Adrenal gland (tissue), 19 donors: ENCODE measurements at regions of chr11 and their contacts with region 1.

Region 1: GRCh38 chr11:2151500-2152257 is 9.3 kb downstream of the INS start:
- DNase-seq: peak; percentile 68 to 94 (median 86)
- H3K4me3 ChIP-seq: no peak overlapping the region
- H3K27ac ChIP-seq: no peak overlapping the region
- H3K4me1 ChIP-seq: peaks cover 0 to 6% of the 10 kb centered on the region in 2 donors
- H3K27me3 ChIP-seq: peaks cover 14% of the 10 kb centered on the region
- CTCF ChIP-seq: peak; percentile 72 to 93 (median 88)
- POLR2A ChIP-seq: no peak

Region 2: DNA sequence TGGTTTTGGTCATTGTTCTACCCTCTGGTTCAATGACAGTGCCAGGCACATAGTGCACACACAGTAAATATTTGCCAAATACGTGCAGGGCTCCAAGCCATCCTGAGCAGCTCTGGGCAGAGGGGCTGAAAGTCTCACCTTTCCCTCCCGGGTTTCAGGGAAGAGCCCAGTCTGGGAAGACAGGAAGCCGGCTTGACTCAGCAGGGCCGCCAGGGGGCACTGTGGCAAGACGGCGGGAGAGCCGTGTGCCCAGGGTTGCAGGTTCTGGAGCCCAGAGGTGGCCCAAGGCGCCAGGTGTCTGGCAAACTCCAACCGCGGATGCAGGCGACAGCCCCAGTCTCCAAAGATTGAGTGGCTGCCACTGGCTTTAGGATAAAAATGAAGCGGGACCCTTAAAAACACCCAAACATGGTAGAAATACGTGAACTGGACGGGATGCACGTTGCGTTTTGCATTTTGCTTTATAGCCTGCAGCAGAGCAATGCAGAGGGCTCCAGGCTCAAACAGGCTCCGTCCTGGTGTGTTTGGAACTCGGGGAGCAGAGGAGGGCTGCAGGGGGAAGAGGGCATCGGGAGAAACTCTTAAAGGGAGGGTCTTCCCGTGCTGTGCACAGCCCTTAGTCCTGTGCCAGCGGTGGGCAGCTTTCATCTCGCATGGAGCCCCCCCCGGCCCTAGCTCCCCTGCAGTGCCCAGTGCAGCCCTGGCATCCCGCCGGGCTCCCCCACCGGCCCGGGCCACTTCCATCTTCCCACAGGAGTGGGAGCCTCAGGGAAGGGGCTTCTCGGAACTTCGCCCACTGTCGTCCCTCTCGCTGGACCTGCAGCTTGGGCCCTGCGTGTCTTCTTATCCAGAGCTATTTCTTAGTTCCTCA is 511.4 kb before region 1 on chr11:
- intact Hi-C with region 1: loop called in 1 of 2 experiments (anchors 10 kb)
- DNase-seq: peak in 2 of 7 donors; percentile 32 to 47
- H3K4me3 ChIP-seq: no peak overlapping the region
- H3K27ac ChIP-seq: no peak overlapping the region
- H3K4me1 ChIP-seq: no peaks in the 10 kb centered on the region
- H3K27me3 ChIP-seq: peaks cover 14% of the 10 kb centered on the region
- CTCF ChIP-seq: peak; percentile 40 to 73 (median 55)
- POLR2A ChIP-seq: no peak

Region 3: GRCh38 chr11:1652771-1653540 is 498.7 kb before region 1 on chr11:
- intact Hi-C with region 1: loop called (anchors 5 to 10 kb)
- DNase-seq: peak; percentile 63 to 88 (median 81)
- H3K4me3 ChIP-seq: no peak overlapping the region
- H3K27ac ChIP-seq: no peak overlapping the region
- H3K4me1 ChIP-seq: peaks cover 0 to 15% of the 10 kb centered on the region in 2 donors
- H3K27me3 ChIP-seq: peaks cover 5% of the 10 kb centered on the region
- CTCF ChIP-seq: peak; percentile 91 to 99 (median 96)
- POLR2A ChIP-seq: no peak

Region 4: DNA sequence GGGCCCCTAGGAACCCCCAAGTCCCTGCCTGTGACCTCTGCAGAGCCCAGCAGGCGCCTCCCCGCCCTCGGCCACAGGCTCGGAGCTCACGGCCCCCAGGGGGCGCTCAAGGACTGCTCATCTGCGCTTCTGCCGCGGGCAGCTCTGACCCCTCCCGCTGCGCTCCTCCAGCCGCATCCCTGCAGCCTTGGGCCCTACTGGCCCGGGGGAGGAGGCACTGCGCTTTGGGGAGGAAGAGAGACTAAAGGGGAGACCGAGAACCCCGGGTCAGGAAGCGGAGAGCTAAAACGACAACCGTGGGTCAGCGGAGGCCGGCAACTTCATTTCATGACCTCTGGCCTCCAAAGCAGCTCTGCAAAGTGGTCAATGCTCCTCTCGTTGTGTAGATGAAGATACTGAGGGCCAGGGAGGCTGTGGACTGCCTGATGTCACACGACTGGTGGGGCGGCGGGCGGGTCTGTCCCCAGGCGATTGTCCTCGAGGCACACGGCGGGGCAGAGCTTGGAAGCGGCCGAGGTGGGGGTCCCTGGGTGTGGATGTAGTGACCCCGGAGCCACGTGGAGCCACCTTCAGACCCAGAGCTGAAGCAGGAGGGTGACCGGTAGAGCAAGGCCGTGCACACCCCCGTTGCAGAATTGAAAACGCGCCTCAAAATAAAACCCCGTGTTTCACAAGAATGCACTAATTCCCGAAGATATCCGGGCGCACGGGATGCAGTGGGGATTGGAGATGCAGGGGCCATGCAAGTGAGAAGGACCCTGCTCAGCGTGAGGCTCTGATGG is 457.4 kb before region 1 on chr11:
- intact Hi-C with region 1: loop called (anchors 2 to 5 kb)
- DNase-seq: peak; percentile 82 to 92 (median 90)
- H3K4me3 ChIP-seq: peak overlapping the region in 1 of 4 donors; percentile 21
- H3K27ac ChIP-seq: no peak overlapping the region
- H3K4me1 ChIP-seq: peaks cover 7 to 11% of the 10 kb centered on the region in 2 donors
- H3K27me3 ChIP-seq: no peaks in the 10 kb centered on the region
- CTCF ChIP-seq: peak; percentile 91 to 96 (median 94)
- POLR2A ChIP-seq: no peak

Region 5: GRCh38 chr11:1796413-1797011 is 355.2 kb before region 1 on chr11:
- intact Hi-C with region 1: no loop called
- DNase-seq: no peak
- H3K4me3 ChIP-seq: no peak overlapping the region
- H3K27ac ChIP-seq: no peak overlapping the region
- H3K4me1 ChIP-seq: no peaks in the 10 kb centered on the region
- H3K27me3 ChIP-seq: peaks cover 6% of the 10 kb centered on the region
- CTCF ChIP-seq: no peak
- POLR2A ChIP-seq: no peak

Region 6: DNA sequence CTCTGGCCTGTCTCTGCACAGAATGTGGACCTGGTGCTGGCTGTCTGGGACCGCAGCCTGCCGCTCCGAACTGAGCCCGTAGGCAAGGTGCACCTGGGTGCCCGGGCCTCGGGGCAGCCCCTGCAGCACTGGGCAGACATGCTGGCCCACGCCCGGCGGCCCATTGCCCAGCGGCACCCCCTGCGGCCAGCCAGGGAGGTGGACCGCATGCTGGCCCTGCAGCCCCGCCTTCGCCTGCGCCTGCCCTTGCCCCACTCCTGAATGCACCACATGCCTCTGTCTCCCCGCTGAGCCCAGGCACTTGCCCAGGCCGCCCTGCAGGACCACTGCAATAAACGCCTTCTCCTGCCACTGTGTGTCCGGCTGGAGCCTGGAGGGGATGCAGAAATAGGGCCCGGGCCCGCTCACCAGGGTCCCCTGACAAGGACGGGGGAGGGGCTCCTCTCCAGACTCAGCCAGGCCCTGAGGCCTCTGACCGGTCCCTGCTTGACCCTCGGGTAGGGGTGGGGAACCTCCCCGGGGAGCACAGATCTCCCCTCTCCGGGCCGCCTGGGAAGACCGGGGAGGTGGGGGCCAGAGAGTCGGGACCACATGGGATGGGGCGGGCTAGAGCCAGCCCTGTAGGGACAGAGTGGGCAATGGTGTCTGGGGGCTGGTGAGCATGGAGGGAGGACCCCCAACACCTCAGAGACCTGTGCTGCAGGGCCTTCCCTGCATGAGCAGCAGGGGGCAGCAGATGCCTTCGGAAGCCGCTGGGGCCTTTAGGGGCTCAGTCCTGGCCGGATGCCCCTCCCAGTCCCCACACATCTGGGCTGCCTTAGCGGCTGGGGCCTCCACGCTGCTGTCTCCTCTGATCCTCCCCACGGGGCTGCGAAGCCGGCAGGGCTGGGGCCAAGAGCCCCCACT is 314.3 kb before region 1 on chr11:
- intact Hi-C with region 1: loop called (anchors 2 to 5 kb)
- DNase-seq: peak; percentile 70 to 83 (median 77)
- H3K4me3 ChIP-seq: no peak overlapping the region
- H3K27ac ChIP-seq: peak overlapping the region in 2 of 5 donors; percentile 30 to 62
- H3K4me1 ChIP-seq: peaks cover 19 to 20% of the 10 kb centered on the region in 2 donors
- H3K27me3 ChIP-seq: no peaks in the 10 kb centered on the region
- CTCF ChIP-seq: peak; percentile 84 to 97 (median 92)
- POLR2A ChIP-seq: no peak

Region 7: GRCh38 chr11:1882519-1883238 is 269.0 kb before region 1 on chr11:
- intact Hi-C with region 1: loop called in 1 of 2 experiments (anchors 5 kb)
- DNase-seq: peak; percentile 73 to 88 (median 82)
- H3K4me3 ChIP-seq: no peak overlapping the region
- H3K27ac ChIP-seq: peak overlapping the region in 3 of 5 donors; percentile 26 to 97 (median 76)
- H3K4me1 ChIP-seq: peaks cover 0 to 24% of the 10 kb centered on the region in 2 donors
- H3K27me3 ChIP-seq: no peaks in the 10 kb centered on the region
- CTCF ChIP-seq: peak; percentile 81 to 93 (median 86)
- POLR2A ChIP-seq: no peak

Region 8: DNA sequence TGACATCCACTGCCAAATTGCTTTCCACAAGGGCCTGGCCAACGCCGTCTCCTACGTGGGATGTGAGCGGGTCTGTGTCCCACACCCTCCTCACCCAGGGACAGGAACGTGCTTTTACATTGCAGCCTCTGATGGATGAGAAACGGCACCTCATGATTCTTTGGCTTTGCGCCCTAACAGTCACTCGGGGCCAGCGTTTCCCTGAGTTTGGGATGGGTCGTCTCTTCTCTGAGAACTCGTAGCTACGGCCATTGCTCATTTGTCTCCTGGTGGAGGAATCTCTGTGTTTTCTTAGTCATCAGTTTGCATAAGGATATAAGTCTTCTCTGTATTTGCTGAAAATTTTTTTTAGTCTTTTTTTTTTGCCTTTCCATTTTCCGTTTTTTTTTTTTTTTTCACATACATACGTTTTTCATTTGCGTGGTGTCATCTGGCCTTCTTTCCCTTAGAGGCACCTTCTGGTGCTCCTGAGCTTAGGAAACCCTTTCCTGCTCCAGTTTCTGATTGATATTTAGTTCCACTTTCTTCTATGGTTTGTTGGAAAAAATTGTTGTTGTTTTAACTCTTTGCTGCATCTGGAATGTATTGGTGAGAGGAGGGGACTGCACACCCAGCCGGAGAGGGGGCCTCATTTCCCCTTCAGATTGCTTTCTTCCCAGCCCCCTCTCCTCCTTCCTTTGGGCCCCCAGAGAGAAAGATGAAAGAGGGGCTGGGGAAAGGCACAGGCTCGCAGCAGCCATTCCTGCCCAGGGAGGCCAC is 220.2 kb before region 1 on chr11:
- intact Hi-C with region 1: loop called in 1 of 2 experiments (anchors 5 kb)
- DNase-seq: peak in 5 of 7 donors; percentile 15 to 76 (median 46)
- H3K4me3 ChIP-seq: no peak overlapping the region
- H3K27ac ChIP-seq: peak overlapping the region in 2 of 5 donors; percentile 67 to 70
- H3K4me1 ChIP-seq: peaks cover 0 to 3% of the 10 kb centered on the region in 2 donors
- H3K27me3 ChIP-seq: no peaks in the 10 kb centered on the region
- CTCF ChIP-seq: no peak
- POLR2A ChIP-seq: no peak

Region 9: GRCh38 chr11:2325719-2326118 is 174.0 kb after region 1 on chr11:
- intact Hi-C with region 1: no loop called
- DNase-seq: peak; percentile 67 to 93 (median 91)
- H3K4me3 ChIP-seq: no peak overlapping the region
- H3K27ac ChIP-seq: no peak overlapping the region
- H3K4me1 ChIP-seq: no peaks in the 10 kb centered on the region
- H3K27me3 ChIP-seq: no peaks in the 10 kb centered on the region
- CTCF ChIP-seq: no peak
- POLR2A ChIP-seq: no peak

Region 10: GRCh38 chr11:2377511-2378443 is 226.1 kb after region 1 on chr11:
- intact Hi-C with region 1: no loop called
- DNase-seq: peak in 6 of 7 donors; percentile 59 to 78 (median 68)
- H3K4me3 ChIP-seq: peak overlapping the region; percentile 66 to 99 (median 71)
- H3K27ac ChIP-seq: peak overlapping the region; percentile 60 to 99 (median 91)
- H3K4me1 ChIP-seq: peaks cover 7 to 41% of the 10 kb centered on the region in 2 donors
- H3K27me3 ChIP-seq: no peaks in the 10 kb centered on the region
- CTCF ChIP-seq: no peak
- POLR2A ChIP-seq: no peak